HepG2 (cell line): ENCODE measurements at regions of chr6 and their contacts with region 1.

Region 1: DNA sequence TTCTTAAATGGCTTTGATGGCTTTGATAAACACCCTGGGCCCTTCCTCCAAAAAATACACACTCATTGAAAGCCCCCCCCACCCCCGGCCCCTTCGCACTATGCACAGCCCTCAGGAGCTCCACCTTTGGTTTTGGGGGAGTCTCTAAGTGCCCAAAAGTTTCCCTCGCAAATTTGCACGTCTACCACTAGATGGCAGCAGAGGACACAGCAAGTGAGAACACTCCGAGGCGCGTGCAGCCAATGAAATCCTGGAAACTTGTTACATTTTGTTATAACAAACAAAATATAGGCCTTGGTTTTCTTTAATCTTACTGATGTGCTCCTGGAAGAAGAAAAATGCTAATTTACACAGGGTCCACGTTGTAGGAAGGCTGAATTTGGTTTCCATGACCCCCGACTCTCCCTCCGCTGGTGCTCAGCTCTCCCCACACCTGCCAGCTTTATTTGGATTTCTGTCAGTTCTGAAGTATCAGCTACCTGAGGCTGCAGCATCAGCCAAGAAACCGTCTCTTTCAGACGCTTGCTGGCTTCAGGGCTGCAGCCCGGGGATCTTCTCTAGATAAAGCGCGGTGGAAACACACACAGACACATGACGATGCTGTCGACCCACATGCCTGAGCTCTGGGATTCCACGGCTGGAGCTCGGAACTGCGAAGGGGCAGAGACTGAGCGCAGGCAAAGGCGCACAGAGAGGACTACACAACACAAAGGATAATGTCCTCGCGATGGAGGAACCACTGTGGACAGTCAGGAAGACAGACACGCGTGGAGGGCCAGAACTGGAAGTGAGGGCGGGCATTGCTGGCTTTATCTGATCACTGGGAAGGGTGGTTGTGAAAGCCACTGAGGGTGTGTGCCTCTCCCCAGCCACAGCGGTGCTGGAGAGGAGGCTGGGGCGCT is 148.4 kb upstream of the RPS6KA2 start:
- DNase-seq: peak; percentile 75
- ATAC-seq: peak; percentile 83
- H3K4me3 ChIP-seq: peak overlapping the region in 2 of 3 experiments; percentile 11 to 49; a peak in 2 of 6 replicates
- H3K27ac ChIP-seq: no peak overlapping the region
- H3K4me1 ChIP-seq: peaks cover 5% of the 10 kb centered on the region
- H3K27me3 ChIP-seq: peaks cover 0 to 78% of the 10 kb centered on the region in 2 experiments; a peak in 4 of 5 replicates
- CTCF ChIP-seq: peak; percentile 84
- EP300 ChIP-seq: no peak
- POLR2A ChIP-seq: no peak
- RAD21 ChIP-seq: peak; percentile 70

Region 2: GRCh38 chr6:167778497-167779139 is 1003.2 kb after region 1 on chr6:
- CTCF ChIA-PET with region 1: no interaction called
- POLR2A ChIA-PET with region 1: no interaction called
- in situ Hi-C with region 1: no loop called
- intact Hi-C with region 1: loop called (anchors 5 kb)
- DNase-seq: no peak
- ATAC-seq: peak; percentile 43
- H3K4me3 ChIP-seq: peak overlapping the region in 1 of 3 experiments; percentile 32; a peak in 1 of 6 replicates
- H3K27ac ChIP-seq: no peak overlapping the region
- H3K4me1 ChIP-seq: peaks cover 48% of the 10 kb centered on the region
- H3K27me3 ChIP-seq: no peaks in the 10 kb centered on the region; a peak in 1 of 5 replicates
- CTCF ChIP-seq: no peak
- EP300 ChIP-seq: no peak
- POLR2A ChIP-seq: no peak
- RAD21 ChIP-seq: no peak